ENCODE measurements at regions of chr10 and their contacts with region 1.

Region 1: DNA sequence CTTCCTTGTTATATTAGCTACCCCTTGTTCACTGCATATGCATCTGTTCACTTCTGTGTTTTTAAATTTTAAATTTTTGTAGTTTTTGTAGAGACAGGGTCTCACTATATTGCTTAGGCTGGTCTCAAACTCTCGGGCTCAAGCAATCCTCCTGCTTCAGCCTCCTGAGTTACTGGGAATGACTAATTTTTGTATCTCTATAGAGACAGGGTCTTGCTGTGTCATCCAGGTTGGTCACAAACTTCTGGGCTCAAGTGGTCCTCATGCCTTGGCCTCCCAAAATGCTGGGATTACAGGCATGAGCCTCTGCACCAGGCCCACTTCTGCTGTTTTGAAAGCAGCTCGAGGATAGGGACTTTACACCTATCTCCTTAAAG is 64.6 kb downstream of the PRTFDC1 start:
- DNase-seq: no peak
- ATAC-seq: peak; percentile 17 to 19 (median 18)
- H3K4me3 ChIP-seq: no peak overlapping the region
- H3K4me3 Mint-ChIP-seq: peak overlapping the region; percentile 79
- H3K27ac ChIP-seq: peak overlapping the region; percentile 69
- H3K27ac Mint-ChIP-seq: peak overlapping the region; percentile 91 to 94
- H3K4me1 ChIP-seq: peaks cover 28% of the 10 kb centered on the region
- H3K4me1 Mint-ChIP-seq: peaks cover 56 to 59% of the 10 kb centered on the region in 2 donors
- H3K27me3 ChIP-seq: no peaks in the 10 kb centered on the region
- H3K27me3 Mint-ChIP-seq: no peaks in the 10 kb centered on the region
- CTCF ChIP-seq: no peak

Region 2: GRCh38 chr10:24952707-24953645 is 65.1 kb after region 1 on chr10:
- intact Hi-C with region 1: loop called (anchors 1 kb)
- DNase-seq: peak; percentile 53 to 75
- ATAC-seq: peak; percentile 74 to 86 (median 85)
- H3K4me3 ChIP-seq: peak overlapping the region; percentile 75
- H3K4me3 Mint-ChIP-seq: peak overlapping the region; percentile 86
- H3K27ac ChIP-seq: no peak overlapping the region
- H3K27ac Mint-ChIP-seq: peak overlapping the region in 1 of 2 donors; percentile 6
- H3K4me1 ChIP-seq: peaks cover 14% of the 10 kb centered on the region
- H3K4me1 Mint-ChIP-seq: peaks cover 6 to 9% of the 10 kb centered on the region in 2 donors
- H3K27me3 ChIP-seq: no peaks in the 10 kb centered on the region
- H3K27me3 Mint-ChIP-seq: no peaks in the 10 kb centered on the region
- CTCF ChIP-seq: peak; percentile 33

Region 3: DNA sequence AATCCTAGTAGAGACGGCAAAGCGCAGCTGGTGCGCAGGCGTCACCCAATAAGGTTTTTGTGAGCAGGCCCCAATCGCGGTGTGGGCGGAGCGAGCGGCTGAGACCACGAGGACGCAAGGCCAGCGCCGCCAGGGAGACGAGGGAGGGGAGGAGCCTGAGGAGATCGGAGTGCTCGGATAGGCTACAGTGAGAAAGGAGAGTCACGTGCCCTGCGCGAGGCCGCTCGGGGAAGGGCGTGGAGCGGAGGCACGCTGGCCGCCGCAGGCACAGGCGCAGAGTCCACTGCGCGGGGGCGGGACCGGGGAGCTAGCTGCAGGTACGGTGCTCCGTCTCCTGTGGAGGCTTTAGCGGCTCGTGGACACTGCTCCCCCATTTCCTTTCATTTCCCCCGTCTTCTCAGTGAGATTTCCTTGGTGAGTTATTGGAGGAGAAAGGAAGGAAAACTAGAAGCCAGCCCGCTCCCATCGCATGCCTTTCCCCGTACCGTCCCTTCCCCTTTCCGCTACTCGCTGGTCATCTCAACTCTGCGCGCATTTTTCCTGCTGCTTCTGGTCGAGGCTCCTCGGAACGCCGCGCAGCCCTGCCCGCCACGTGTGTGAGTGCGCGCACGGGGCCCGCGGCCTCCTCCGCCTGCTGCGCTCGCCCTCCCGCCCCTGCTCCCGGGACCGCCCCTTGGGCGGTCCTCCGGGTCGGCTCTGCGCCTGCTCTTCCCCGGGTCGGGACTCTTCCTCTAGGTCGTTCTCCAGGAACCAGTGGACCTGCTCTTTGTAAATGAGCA is 128.7 kb after region 1 on chr10 and contains the start of gene THNSL1:
- intact Hi-C with region 1: loop called (anchors 1 kb)
- DNase-seq: peak; percentile 96 to 99
- ATAC-seq: peak; percentile 93 to 100 (median 95)
- H3K4me3 ChIP-seq: peak within 1 kb of the TSS; percentile 56
- H3K4me3 Mint-ChIP-seq: peak within 1 kb of the TSS; percentile 98
- H3K27ac ChIP-seq: peak within 1 kb of the TSS; percentile 80
- H3K27ac Mint-ChIP-seq: peak within 1 kb of the TSS; percentile 95 to 99
- H3K4me1 ChIP-seq: peaks cover 8% of the 10 kb centered on the region
- H3K4me1 Mint-ChIP-seq: peaks cover 20 to 21% of the 10 kb centered on the region in 2 donors
- H3K27me3 ChIP-seq: no peaks in the 10 kb centered on the region
- H3K27me3 Mint-ChIP-seq: no peaks in the 10 kb centered on the region
- CTCF ChIP-seq: no peak
- total RNA-seq, gene THNSL1: 1.2 to 2.9 (median 2.3) TPM